Activated T-helper 1 cell treated with anti-CD3 and anti-CD28 coated beads, Interleukin-12 subunit alpha, Interleukin-12 subunit beta, Interleukin-2, Interleukin-4 antibody, amounts not matched to agents 30 ng/mL and 10 ng/mL and 1 ng/mL, durations not matched to agents 14 hours and 24 hours and 36 hours (primary cell): ENCODE measurements at regions of chr17 and their contacts with region 1.

Region 1: DNA sequence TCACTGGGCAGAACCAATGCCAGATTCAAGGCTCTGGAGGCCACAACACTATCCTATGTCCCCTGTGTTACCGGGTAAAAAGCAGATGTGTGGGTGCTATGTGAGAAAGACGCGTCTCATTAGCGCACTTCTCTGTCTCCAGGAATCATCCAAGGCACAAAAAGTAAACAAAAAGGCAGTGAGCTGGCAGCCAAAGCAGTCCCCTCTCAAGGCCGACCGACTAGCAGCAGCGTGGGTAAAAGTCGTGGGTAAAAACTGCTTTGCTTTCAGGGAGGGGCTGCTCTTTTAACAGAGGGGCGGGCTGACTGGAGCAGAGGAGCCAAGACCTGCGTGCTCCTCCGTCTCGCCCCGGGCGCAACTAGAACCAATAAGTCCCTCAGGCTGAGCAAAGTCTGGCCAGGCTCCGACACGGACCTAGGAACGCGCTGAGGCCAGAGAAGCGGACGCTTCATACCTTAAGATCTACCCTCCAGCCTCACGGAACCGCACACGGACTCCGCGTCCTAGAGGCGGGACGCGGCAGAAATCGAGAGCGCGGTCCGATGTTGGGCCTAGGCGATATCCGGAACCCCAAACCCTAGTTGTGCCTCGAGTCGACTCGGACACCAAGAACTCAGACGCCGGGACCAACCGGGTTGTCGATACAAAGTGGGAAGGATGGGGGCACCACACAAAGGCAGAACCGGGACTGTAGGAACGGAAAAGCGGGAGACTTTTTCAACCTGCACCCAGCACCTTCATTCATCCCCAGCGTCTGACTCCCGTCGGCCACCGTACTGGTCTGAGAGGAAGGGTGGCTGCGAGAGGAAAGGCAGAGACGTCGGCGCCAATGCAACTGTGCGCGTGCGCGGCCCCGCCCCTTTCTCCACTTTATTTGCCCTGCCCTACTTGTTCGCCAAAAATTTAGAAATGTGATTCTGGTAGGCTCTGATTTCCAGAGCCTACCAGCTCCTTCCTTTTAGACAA is at the start of gene INTS2:
- DNase-seq: peak; percentile 90
- H3K4me3 Mint-ChIP-seq: peak within 1 kb of the TSS; percentile 92
- H3K27ac Mint-ChIP-seq: peak within 1 kb of the TSS; percentile 93
- H3K4me1 Mint-ChIP-seq: peaks cover 22% of the 10 kb centered on the region
- H3K27me3 Mint-ChIP-seq: no peaks in the 10 kb centered on the region
- total RNA-seq, gene INTS2: 25.4 and 25.6 TPM in 2 replicates

Region 2: GRCh38 chr17:61862975-61863800 is 64.3 kb before region 1 on chr17 and contains the start of gene BRIP1:
- intact Hi-C with region 1: loop called (anchors 1 kb)
- DNase-seq: peak; percentile 86
- H3K4me3 Mint-ChIP-seq: peak within 1 kb of the TSS; percentile 91
- H3K27ac Mint-ChIP-seq: peak within 1 kb of the TSS; percentile 89
- H3K4me1 Mint-ChIP-seq: peaks cover 44% of the 10 kb centered on the region
- H3K27me3 Mint-ChIP-seq: no peaks in the 10 kb centered on the region
- total RNA-seq, gene BRIP1: 17.9 and 18.2 TPM in 2 replicates

Region 3: GRCh38 chr17:61981323-61981722 is 53.8 kb after region 1 on chr17:
- intact Hi-C with region 1: loop called (anchors 5 kb)
- DNase-seq: no peak
- H3K4me3 Mint-ChIP-seq: no peak overlapping the region
- H3K27ac Mint-ChIP-seq: no peak overlapping the region
- H3K4me1 Mint-ChIP-seq: peaks cover 5% of the 10 kb centered on the region
- H3K27me3 Mint-ChIP-seq: no peaks in the 10 kb centered on the region